ENCODE measurements at regions of chr7 and their contacts with region 1.

Region 1: DNA sequence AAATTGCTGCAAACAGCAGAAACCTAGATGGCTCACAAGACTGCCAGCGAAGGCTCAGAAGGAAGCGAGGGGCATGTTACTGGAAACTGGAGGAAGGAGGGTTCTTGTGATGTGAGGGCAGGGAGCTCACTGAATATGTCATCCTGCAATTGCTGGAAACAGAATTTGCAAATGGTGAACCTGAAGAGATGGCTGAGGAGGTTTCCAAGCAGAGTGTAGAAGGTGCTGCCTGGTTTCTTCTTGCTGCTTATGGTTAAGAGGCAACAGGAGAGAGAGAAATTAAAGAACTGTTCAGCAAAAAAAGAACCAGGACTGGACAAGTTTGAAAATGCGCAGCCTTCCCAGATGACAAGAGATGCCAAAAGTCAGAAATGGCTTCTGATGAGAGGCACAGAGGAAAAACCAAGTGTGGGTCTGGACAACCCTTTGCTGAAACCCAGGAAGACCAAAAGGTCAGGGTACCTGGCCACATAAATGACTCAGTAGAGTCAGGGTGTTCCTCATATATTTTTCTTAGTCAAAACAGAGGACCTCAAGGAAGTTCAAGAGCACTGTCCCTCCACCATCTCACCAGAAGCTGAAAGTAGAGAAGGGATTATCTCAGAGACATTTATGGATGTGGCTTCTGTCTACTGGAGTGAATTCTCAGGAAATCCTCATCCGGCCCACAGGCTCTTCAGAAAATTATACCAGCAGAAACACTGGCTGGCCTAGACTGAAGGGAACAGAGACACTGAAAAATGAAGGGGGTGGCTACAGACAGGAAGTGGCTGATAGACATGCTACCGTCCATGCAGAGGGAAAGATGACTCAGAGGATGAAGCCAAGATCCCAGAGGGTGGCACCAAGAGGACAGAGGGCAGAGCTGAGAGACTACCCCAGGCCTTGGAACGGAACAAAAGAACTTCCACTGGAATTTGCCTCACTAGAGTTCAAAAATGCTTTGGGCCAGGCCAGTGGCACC is 10.1 kb downstream of the PAPOLB start:
- DNase-seq: no peak
- H3K4me3 ChIP-seq: no peak overlapping the region
- H3K27ac ChIP-seq: no peak overlapping the region
- H3K4me1 ChIP-seq: no peaks in the 10 kb centered on the region
- H3K27me3 ChIP-seq: peaks cover 0 to 9% (median 0%) of the 10 kb centered on the region in 7 donors
- CTCF ChIP-seq: no peak
- POLR2A ChIP-seq: no peak

Region 2: DNA sequence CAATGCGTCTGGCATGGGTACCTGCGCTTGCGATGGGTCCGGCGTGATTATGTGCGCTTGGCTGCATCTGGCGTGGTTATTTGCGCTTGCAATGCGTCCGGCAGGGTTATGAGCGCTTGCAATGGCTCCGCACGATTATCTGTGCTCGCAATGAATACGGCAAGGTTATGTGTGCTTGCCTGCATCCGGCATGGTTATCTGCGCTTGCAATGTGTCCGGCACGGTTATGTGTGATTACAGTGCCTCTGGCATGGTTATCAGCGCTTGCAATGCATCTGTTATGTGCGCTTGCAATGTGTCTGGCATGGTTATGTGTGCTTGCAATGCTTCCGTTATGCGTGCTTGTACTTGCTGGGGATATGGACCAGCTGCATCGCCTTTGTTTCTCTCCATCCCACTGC is 231.6 kb after region 1 on chr7:
- intact Hi-C with region 1: loop called (anchors 5 kb)
- DNase-seq: no peak
- H3K4me3 ChIP-seq: no peak overlapping the region
- H3K27ac ChIP-seq: no peak overlapping the region
- H3K4me1 ChIP-seq: peaks cover 0 to 6% (median 5%) of the 10 kb centered on the region in 6 donors
- H3K27me3 ChIP-seq: peaks cover 0 to 45% (median 10%) of the 10 kb centered on the region in 7 donors
- CTCF ChIP-seq: no peak
- POLR2A ChIP-seq: no peak

Region 3: DNA sequence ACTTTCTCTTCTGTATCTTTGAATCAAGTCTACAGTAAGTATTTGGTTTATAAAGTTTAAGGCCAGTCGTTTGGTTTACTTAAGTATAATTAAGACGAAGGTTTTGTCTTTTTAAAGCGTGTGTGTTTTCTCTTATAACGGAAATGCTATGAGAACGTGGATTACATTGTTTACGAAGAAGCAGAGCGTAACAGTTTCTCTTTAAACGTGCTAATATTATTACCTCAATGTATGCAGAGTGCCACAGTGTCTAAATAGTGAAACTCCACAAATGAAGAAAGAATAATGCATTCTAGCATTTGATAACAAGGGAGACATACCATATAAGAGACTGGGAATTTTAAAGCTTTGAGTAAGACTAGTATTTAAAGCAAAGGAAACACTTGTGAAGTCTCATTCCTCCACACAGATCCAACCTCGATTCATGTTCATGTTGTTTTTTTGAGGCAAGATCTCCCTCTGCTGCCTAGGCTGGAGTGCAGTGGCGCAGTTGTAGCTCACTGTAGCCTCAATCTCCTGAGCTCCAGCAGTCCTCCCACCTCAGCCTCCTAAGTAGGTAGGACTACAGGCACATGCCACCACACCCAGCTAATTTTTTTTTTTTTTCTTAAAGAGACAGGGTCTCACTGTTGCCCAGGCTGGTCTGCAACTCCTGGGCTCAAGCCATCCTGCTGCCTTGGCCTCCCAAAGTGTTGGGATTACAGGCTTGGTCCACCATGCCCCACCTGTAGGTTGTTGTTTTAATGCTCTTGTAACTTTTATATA is 1254.6 kb after region 1 on chr7:
- intact Hi-C with region 1: no loop called
- DNase-seq: no peak
- H3K4me3 ChIP-seq: peak overlapping the region; percentile 63 to 82 (median 72)
- H3K27ac ChIP-seq: peak overlapping the region; percentile 45 to 98 (median 96)
- H3K4me1 ChIP-seq: peaks cover 17 to 57% (median 31%) of the 10 kb centered on the region in 6 donors
- H3K27me3 ChIP-seq: no peaks in the 10 kb centered on the region
- CTCF ChIP-seq: peak in 5 of 11 experiments; percentile 14 to 28 (median 23)
- POLR2A ChIP-seq: no peak

Measured in spleen (tissue), 13 donors.